Activated CD4-positive, alpha-beta T cell treated with anti-CD3 and anti-CD28 coated beads for 36 hours (primary cell): ENCODE measurements at regions of chr3 and their contacts with region 1.

Region 1: GRCh38 chr3:42839616-42840015 is 30.4 kb downstream of the ACKR2 start:
- DNase-seq: peak; percentile 53
- ATAC-seq: peak; percentile 98
- H3K4me3 Mint-ChIP-seq: no peak overlapping the region
- H3K27ac Mint-ChIP-seq: no peak overlapping the region
- H3K4me1 Mint-ChIP-seq: no peaks in the 10 kb centered on the region
- H3K27me3 Mint-ChIP-seq: no peaks in the 10 kb centered on the region

Region 2: DNA sequence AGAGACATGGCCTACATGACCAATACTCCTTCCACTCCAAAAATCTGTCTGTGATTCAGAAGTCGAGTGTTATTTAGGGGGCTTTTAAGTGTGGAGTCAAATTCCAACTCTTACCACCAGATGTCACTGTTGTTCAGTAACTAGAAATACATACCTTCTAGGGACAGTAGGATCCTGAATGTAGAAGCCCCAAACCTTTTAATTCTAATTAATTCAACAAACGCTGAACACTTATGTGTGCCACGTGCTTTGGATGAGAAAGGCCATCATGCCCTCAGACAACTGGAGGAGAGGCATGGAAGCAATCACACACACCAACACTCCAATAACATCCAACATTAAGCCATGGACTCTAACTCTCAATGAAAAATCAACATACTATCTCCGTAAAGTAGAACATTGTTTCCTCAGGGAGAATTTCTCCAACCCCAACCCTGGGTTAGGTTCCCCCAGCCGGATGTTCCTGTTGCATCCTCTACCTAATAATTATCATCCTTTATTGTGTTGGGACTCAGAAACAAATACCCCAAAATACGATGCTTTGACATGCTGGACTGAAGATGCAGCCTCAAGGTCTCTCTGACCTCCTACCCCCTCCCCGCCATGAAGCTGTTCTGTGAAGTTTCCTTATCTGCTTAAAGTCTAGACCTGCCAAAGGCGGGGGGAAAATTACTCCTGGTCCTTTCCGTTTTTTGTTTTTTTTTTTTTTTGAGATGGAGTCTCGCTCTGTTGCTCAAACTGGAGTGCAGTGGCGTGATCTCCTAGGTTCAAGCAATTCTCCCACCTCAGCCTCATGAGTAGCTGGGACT is 58.5 kb before region 1 on chr3:
- CTCF ChIA-PET with region 1: interaction called, 10 read pairs
- POLR2A ChIA-PET with region 1: no interaction called
- intact Hi-C with region 1: loop called (anchors 1 to 2 kb)
- DNase-seq: peak; percentile 29
- ATAC-seq: peak; percentile 87
- H3K4me3 Mint-ChIP-seq: no peak overlapping the region
- H3K27ac Mint-ChIP-seq: no peak overlapping the region
- H3K4me1 Mint-ChIP-seq: no peaks in the 10 kb centered on the region
- H3K27me3 Mint-ChIP-seq: no peaks in the 10 kb centered on the region